GM13977 (cell line): ENCODE measurements at regions of chr13 and their contacts with region 1.

Region 1: DNA sequence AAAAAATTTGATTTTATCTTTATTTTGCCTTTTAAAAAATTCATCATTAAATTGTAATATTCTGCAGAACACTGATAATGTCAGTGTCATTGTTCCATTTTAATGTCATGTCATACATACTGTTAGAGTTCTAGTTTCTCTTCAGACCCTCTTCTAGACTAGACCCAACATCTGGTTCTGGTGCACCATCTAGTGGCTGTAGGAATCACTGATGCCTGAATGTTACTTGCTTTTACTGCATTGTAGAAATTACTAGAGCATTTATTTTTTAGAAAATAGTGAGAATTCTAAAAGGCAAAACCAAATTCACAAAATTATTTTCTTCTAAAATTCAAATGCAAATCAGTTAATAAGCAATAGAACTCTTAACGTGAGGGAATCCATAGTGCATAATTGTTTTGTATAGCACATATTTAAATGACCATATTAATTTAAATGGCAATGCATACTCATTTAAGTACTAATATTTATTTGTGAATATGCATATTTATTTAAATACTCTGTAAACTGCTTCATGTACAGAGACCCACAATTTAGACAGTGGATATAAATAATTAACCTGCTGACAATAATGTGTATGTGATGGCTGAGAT is 425.7 kb downstream of the KLF12 start:
- DNase-seq: peak; percentile 47
- CTCF ChIP-seq: peak; percentile 83

Region 2: DNA sequence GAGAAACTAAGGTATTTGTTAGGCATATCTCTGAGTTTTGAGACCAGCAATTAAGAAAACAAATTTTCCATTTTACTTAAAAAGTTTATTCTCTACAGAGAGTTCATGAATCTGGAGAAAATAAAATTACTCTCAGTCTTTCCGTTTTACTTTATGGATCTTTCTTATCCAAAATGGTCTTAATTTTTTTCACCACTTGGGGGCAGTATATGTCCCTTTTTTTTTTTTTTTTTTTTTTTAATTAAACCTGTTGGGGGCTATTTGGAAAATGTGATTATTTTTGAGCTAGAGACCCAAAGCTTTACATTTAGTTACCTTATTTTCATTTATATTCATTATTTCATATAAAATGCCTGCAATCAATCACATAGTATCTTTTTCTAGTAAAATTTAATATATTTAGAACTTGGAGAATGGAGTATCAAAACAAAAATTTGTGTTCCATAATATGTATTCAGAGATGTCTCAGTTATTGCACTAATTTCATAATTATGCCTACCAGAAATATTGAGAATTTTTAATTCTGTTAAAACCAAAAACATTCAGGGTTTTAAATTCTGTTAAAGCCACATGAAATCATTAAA is 899.5 kb before region 1 on chr13:
- in situ Hi-C with region 1: loop called (anchors 25 kb)
- DNase-seq: no peak
- CTCF ChIP-seq: peak; percentile 43

Region 3: GRCh38 chr13:73058736-73059459 is 649.6 kb before region 1 on chr13 and contains the start of gene KLF5:
- in situ Hi-C with region 1: loop called (anchors 25 kb)
- DNase-seq: peak; percentile 99
- CTCF ChIP-seq: no peak